HEK293 (cell line): ENCODE measurements at regions of chr1 and their contacts with region 1.

Region 1: GRCh38 chr1:31663622-31664452 is 19.2 kb upstream of the PEF1 start:
- H3K4me3 ChIP-seq: no peak overlapping the region
- H3K27ac ChIP-seq: no peak overlapping the region
- H3K4me1 ChIP-seq: no peaks in the 10 kb centered on the region
- CTCF ChIP-seq: peak; percentile 82

Region 2: GRCh38 chr1:31705080-31705866 is 41.4 kb after region 1 on chr1:
- CTCF ChIA-PET with region 1: interaction called, 23 read pairs
- POLR2A ChIA-PET with region 1: interaction called, 4 read pairs
- H3K4me3 ChIP-seq: no peak overlapping the region
- H3K27ac ChIP-seq: no peak overlapping the region
- H3K4me1 ChIP-seq: peaks cover 3% of the 10 kb centered on the region
- CTCF ChIP-seq: peak; percentile 27; the same call in 1 of the 2 replicates

Region 3: GRCh38 chr1:31798433-31799195 is 134.8 kb after region 1 on chr1:
- CTCF ChIA-PET with region 1: no interaction called
- POLR2A ChIA-PET with region 1: no interaction called
- H3K4me3 ChIP-seq: no peak overlapping the region
- H3K27ac ChIP-seq: no peak overlapping the region
- H3K4me1 ChIP-seq: no peaks in the 10 kb centered on the region
- CTCF ChIP-seq: no peak